Activated CD4-positive, alpha-beta T cell treated with anti-CD3 and anti-CD28 coated beads, Interleukin-2, amount 10 ng/mL, durations not matched to agents 7 days and 5 days (primary cell): ENCODE measurements at regions of chr1 and their contacts with region 1.

Region 1: GRCh38 chr1:205523891-205524793 is 19.7 kb downstream of the CDK18 start:
- DNase-seq: peak; percentile 77
- H3K4me3 Mint-ChIP-seq: no peak overlapping the region
- H3K27ac Mint-ChIP-seq: no peak overlapping the region
- H3K4me1 Mint-ChIP-seq: no peaks in the 10 kb centered on the region
- H3K27me3 Mint-ChIP-seq: no peaks in the 10 kb centered on the region

Region 2: GRCh38 chr1:205273551-205273982 is 250.6 kb before region 1 on chr1:
- CTCF ChIA-PET with region 1: interaction called, 13 read pairs
- POLR2A ChIA-PET with region 1: no interaction called
- DNase-seq: peak; percentile 89
- H3K4me3 Mint-ChIP-seq: no peak overlapping the region
- H3K27ac Mint-ChIP-seq: peak overlapping the region; percentile 72
- H3K4me1 Mint-ChIP-seq: peaks cover 33% of the 10 kb centered on the region
- H3K27me3 Mint-ChIP-seq: no peaks in the 10 kb centered on the region

Region 3: GRCh38 chr1:205396967-205397616 is 127.0 kb before region 1 on chr1:
- CTCF ChIA-PET with region 1: interaction called, 15 read pairs
- POLR2A ChIA-PET with region 1: no interaction called
- DNase-seq: peak; percentile 25
- H3K4me3 Mint-ChIP-seq: no peak overlapping the region
- H3K27ac Mint-ChIP-seq: no peak overlapping the region
- H3K4me1 Mint-ChIP-seq: no peaks in the 10 kb centered on the region
- H3K27me3 Mint-ChIP-seq: peaks cover 44% of the 10 kb centered on the region

Region 4: GRCh38 chr1:205493241-205494085 is 30.7 kb before region 1 on chr1:
- CTCF ChIA-PET with region 1: interaction called, 42 read pairs
- POLR2A ChIA-PET with region 1: no interaction called
- DNase-seq: no peak
- H3K4me3 Mint-ChIP-seq: no peak overlapping the region
- H3K27ac Mint-ChIP-seq: no peak overlapping the region
- H3K4me1 Mint-ChIP-seq: peaks cover 9% of the 10 kb centered on the region
- H3K27me3 Mint-ChIP-seq: peaks cover 29% of the 10 kb centered on the region

Region 5: GRCh38 chr1:205536759-205537361 is 12.7 kb after region 1 on chr1:
- CTCF ChIA-PET with region 1: interaction called, 13 read pairs
- POLR2A ChIA-PET with region 1: no interaction called
- DNase-seq: no peak
- H3K4me3 Mint-ChIP-seq: no peak overlapping the region
- H3K27ac Mint-ChIP-seq: no peak overlapping the region
- H3K4me1 Mint-ChIP-seq: peaks cover 8% of the 10 kb centered on the region
- H3K27me3 Mint-ChIP-seq: peaks cover 21% of the 10 kb centered on the region

Region 6: GRCh38 chr1:205631727-205632373 is 107.7 kb after region 1 on chr1 and contains the start of gene ELK4:
- CTCF ChIA-PET with region 1: interaction called, 10 read pairs
- POLR2A ChIA-PET with region 1: no interaction called
- DNase-seq: peak; percentile 99
- H3K4me3 Mint-ChIP-seq: peak within 1 kb of the TSS; percentile 81
- H3K27ac Mint-ChIP-seq: peak within 1 kb of the TSS; percentile 95
- H3K4me1 Mint-ChIP-seq: peaks cover 39% of the 10 kb centered on the region
- H3K27me3 Mint-ChIP-seq: peaks cover 5% of the 10 kb centered on the region
- total RNA-seq, gene ELK4: 99.4 to 103 TPM